PC-9 (cell line): ENCODE measurements at regions of chr6 and their contacts with region 1.

Region 1: DNA sequence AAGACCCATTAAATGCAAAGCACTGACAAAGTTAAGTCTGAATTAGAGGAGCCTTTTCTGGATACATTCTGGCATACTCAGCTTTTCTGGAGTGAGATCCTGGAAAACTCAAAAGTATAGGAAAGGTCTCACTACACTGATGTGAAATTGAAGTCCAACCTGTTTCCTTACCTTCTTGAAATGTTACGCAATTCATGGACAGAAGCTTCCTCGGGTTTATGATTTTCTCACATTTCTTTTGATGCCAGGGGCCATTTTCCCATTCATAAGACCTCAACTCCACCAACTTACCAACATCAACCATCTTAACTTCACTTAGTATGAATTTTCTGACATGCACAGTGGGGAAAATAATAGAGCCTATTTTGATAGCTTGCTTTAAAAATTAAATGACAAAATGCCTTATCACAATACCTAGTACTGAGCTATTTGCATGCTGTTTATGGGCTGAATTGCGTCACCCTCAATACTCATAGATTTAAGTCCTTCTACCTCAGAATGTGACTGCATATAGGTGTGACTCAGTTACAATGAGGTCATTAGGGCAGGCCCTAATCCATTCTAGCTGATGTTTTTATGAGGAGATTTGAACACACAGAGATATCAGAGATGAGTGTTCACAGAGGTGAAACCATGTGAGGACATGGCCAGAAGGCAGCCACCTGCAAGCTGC is 73.4 kb upstream of the RAB32 start:
- DNase-seq: no peak
- H3K4me3 ChIP-seq: no peak overlapping the region
- H3K27ac ChIP-seq: no peak overlapping the region
- H3K4me1 ChIP-seq: 0 out of 2 replicates have a peak, but pooled peaks cover 4% of the 10 kb centered on the region
- H3K27me3 ChIP-seq: no peaks in the 10 kb centered on the region
- CTCF ChIP-seq: no peak

Region 2: GRCh38 chr6:145178391-145178790 is 1291.8 kb before region 1 on chr6:
- CTCF ChIA-PET with region 1: no interaction called
- POLR2A ChIA-PET with region 1: interaction called, 13 read pairs
- intact Hi-C with region 1: no loop called
- DNase-seq: no peak
- H3K4me3 ChIP-seq: no peak overlapping the region
- H3K27ac ChIP-seq: no peak overlapping the region
- H3K4me1 ChIP-seq: no peaks in the 10 kb centered on the region
- H3K27me3 ChIP-seq: no peaks in the 10 kb centered on the region
- CTCF ChIP-seq: no peak

Region 3: DNA sequence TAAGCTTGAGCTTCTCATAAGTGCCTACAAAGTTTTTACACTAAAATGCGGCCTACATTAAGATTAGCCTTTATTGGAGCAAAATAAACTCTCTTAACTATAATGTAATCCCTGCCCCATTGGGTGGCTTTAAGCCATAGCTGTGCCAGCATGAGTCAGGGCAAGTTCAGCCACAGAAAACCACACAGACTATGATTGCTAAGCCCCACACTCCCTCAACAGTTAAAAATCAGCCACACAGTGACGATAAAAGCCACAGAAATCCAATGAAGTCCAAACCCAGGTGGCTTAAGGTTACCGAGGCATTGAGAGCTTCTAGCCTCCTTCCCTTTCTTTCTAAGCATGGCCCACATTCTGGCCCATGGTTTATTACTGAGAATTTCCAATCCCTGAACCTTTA is 379.8 kb before region 1 on chr6:
- CTCF ChIA-PET with region 1: no interaction called
- POLR2A ChIA-PET with region 1: no interaction called
- intact Hi-C with region 1: no loop called
- DNase-seq: no peak
- H3K4me3 ChIP-seq: no peak overlapping the region
- H3K27ac ChIP-seq: no peak overlapping the region
- H3K4me1 ChIP-seq: no peaks in the 10 kb centered on the region
- H3K27me3 ChIP-seq: no peaks in the 10 kb centered on the region
- CTCF ChIP-seq: no peak

Region 4: GRCh38 chr6:147016440-147016839 is 546.2 kb after region 1 on chr6:
- CTCF ChIA-PET with region 1: no interaction called
- POLR2A ChIA-PET with region 1: no interaction called
- intact Hi-C with region 1: no loop called
- DNase-seq: no peak
- H3K4me3 ChIP-seq: no peak overlapping the region
- H3K27ac ChIP-seq: no peak overlapping the region
- H3K4me1 ChIP-seq: no peaks in the 10 kb centered on the region
- H3K27me3 ChIP-seq: no peaks in the 10 kb centered on the region
- CTCF ChIP-seq: no peak